Activated CD8-positive, alpha-beta memory T cell treated with anti-CD3 and anti-CD28 coated beads, Interleukin-2, amount 10 ng/mL, durations not matched to agents 7 days and 5 days (primary cell): ENCODE measurements at regions of chr11 and their contacts with region 1.

Region 1: GRCh38 chr11:60831143-60831500 is 10.8 kb upstream of the CCDC86 start:
- DNase-seq: peak; percentile 87
- ATAC-seq: peak; percentile 91
- H3K4me3 Mint-ChIP-seq: no peak overlapping the region
- H3K27ac Mint-ChIP-seq: no peak overlapping the region
- H3K4me1 Mint-ChIP-seq: peaks cover 33% of the 10 kb centered on the region
- H3K27me3 Mint-ChIP-seq: peaks cover 17% of the 10 kb centered on the region

Region 2: DNA sequence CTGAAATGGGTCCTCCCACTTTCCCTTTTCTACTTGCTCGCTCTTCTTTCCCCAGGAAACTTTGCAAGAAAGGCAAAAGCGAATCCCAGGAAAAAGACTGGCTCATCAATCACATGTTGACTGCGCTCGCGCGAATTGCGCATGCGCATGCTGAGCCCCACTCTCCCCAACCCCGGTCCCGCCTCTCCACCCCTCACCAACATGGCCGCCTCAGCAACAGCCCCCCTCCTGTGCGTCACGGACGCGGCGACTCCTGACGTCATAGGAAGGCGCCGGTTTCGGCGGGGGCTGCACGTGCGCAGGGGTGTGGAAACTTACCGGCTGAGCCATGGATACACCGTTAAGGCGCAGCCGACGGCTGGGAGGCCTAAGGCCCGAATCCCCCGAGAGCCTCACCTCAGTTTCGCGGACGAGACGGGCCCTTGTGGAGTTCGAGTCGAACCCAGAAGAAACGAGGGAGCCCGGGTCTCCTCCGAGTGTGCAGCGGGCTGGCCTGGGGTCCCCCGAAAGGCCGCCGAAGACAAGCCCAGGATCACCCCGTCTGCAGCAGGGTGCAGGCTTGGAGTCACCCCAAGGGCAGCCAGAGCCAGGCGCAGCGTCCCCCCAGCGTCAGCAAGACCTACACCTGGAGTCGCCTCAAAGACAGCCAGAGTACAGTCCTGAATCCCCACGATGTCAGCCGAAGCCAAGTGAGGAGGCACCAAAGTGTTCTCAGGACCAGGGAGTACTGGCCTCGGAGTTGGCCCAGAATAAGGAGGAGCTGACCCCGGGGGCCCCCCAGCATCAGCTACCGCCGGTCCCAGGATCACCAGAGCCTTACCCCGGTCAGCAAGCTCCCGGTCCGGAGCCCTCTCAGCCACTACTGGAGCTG is 10.9 kb after region 1 on chr11 and contains the start of gene CCDC86:
- CTCF ChIA-PET with region 1: interaction called, 20 read pairs
- DNase-seq: peak; percentile 98
- ATAC-seq: peak; percentile 91
- H3K4me3 Mint-ChIP-seq: peak within 1 kb of the TSS; percentile 84
- H3K27ac Mint-ChIP-seq: peak within 1 kb of the TSS; percentile 84
- H3K4me1 Mint-ChIP-seq: peaks cover 41% of the 10 kb centered on the region
- H3K27me3 Mint-ChIP-seq: no peaks in the 10 kb centered on the region
- total RNA-seq, gene CCDC86: 26.5 to 40.8 TPM

Region 3: GRCh38 chr11:60855726-60856633 is 24.9 kb after region 1 on chr11 and contains the start of gene PTGDR2:
- CTCF ChIA-PET with region 1: interaction called, 20 read pairs
- DNase-seq: no peak
- ATAC-seq: no peak
- H3K4me3 Mint-ChIP-seq: peak within 1 kb of the TSS; percentile 58
- H3K27ac Mint-ChIP-seq: peak within 1 kb of the TSS; percentile 64
- H3K4me1 Mint-ChIP-seq: peaks cover 36% of the 10 kb centered on the region
- H3K27me3 Mint-ChIP-seq: peaks cover 5% of the 10 kb centered on the region
- total RNA-seq, gene PTGDR2: 1.1 to 3.7 TPM

Region 4: GRCh38 chr11:60913793-60914632 is 82.9 kb after region 1 on chr11 and contains the start of gene TMEM109:
- CTCF ChIA-PET with region 1: interaction called, 11 read pairs
- DNase-seq: peak; percentile 93
- ATAC-seq: peak; percentile 77
- H3K4me3 Mint-ChIP-seq: peak within 1 kb of the TSS; percentile 94
- H3K27ac Mint-ChIP-seq: peak within 1 kb of the TSS; percentile 98
- H3K4me1 Mint-ChIP-seq: peaks cover 36% of the 10 kb centered on the region
- H3K27me3 Mint-ChIP-seq: peaks cover 11% of the 10 kb centered on the region
- total RNA-seq, gene TMEM109: 106 to 121 TPM